ENCODE measurements at regions of chr7 and their contacts with region 1.

Region 1: GRCh38 chr7:105154084-105154483 is 140.1 kb downstream of the KMT2E start:
- DNase-seq: no peak
- H3K4me3 Mint-ChIP-seq: no peak overlapping the region
- H3K27ac Mint-ChIP-seq: no peak overlapping the region
- H3K4me1 Mint-ChIP-seq: peaks cover 7% of the 10 kb centered on the region
- H3K27me3 Mint-ChIP-seq: no peaks in the 10 kb centered on the region

Region 2: GRCh38 chr7:105098863-105099515 is 55.1 kb before region 1 on chr7:
- CTCF ChIA-PET with region 1: no interaction called
- POLR2A ChIA-PET with region 1: no interaction called
- DNase-seq: no peak
- H3K4me3 Mint-ChIP-seq: no peak overlapping the region
- H3K27ac Mint-ChIP-seq: no peak overlapping the region
- H3K4me1 Mint-ChIP-seq: peaks cover 33% of the 10 kb centered on the region
- H3K27me3 Mint-ChIP-seq: no peaks in the 10 kb centered on the region

Region 3: GRCh38 chr7:105141068-105141467 is 13.0 kb before region 1 on chr7:
- CTCF ChIA-PET with region 1: interaction called, 12 read pairs
- POLR2A ChIA-PET with region 1: no interaction called
- DNase-seq: no peak
- H3K4me3 Mint-ChIP-seq: no peak overlapping the region
- H3K27ac Mint-ChIP-seq: no peak overlapping the region
- H3K4me1 Mint-ChIP-seq: peaks cover 3% of the 10 kb centered on the region
- H3K27me3 Mint-ChIP-seq: no peaks in the 10 kb centered on the region

Region 4: GRCh38 chr7:105315357-105315756 is 161.3 kb after region 1 on chr7:
- CTCF ChIA-PET with region 1: no interaction called
- POLR2A ChIA-PET with region 1: no interaction called
- DNase-seq: no peak
- H3K4me3 Mint-ChIP-seq: no peak overlapping the region
- H3K27ac Mint-ChIP-seq: no peak overlapping the region
- H3K4me1 Mint-ChIP-seq: peaks cover 15% of the 10 kb centered on the region
- H3K27me3 Mint-ChIP-seq: no peaks in the 10 kb centered on the region

Measured in activated CD4-positive, alpha-beta T cell treated with anti-CD3 and anti-CD28 coated beads, Interleukin-2, amount 10 ng/mL, durations not matched to agents 7 days and 5 days (primary cell).